Pancreas (tissue), 10 donors: ENCODE measurements at regions of chr17 and their contacts with region 1.

Region 1: DNA sequence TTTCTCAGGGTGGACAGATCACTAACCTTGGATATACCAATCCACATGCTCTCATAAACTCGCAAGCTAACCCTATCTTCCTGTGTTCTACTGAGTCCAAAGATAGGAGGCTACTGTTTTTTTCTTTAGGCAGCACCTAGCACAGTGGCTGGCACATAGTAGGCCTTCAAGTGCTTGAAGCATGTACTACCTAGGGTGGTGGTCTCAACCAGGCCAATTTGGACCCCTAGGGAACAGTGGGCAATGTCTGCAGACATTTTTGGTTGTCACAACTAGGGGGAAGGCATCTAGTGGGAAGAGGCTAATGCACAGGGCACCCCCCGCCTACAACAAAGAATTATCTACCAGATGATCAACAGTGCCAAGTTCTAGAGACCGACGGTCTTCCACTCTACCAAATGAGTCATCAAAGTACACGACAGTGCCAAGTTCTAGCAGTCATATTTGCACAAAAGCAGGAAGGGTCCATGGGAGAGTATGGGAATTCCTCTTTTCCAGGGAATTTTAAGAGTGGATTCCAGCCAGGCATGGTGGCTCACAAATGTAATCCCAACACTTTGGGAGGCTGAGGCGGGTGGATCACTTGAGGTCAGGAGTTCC is 390.3 kb downstream of the SLC39A11 start:
- DNase-seq: no peak
- ATAC-seq: peak in 1 of 4 donors; percentile 34
- H3K4me3 ChIP-seq: no peak overlapping the region
- H3K27ac ChIP-seq: no peak overlapping the region
- H3K4me1 ChIP-seq: no peaks in the 10 kb centered on the region
- H3K27me3 ChIP-seq: no peaks in the 10 kb centered on the region
- CTCF ChIP-seq: no peak

Region 2: GRCh38 chr17:72560303-72561247 is 141.7 kb before region 1 on chr17:
- intact Hi-C with region 1: loop called in 1 of 3 experiments (anchors 10 kb)
- DNase-seq: peak in 4 of 6 donors; percentile 54 to 81 (median 60)
- ATAC-seq: peak; percentile 79 to 90 (median 84)
- H3K4me3 ChIP-seq: no peak overlapping the region
- H3K27ac ChIP-seq: no peak overlapping the region
- H3K4me1 ChIP-seq: peaks cover 0 to 9% (median 0%) of the 10 kb centered on the region in 3 donors
- H3K27me3 ChIP-seq: no peaks in the 10 kb centered on the region
- CTCF ChIP-seq: peak; percentile 74 to 85 (median 78)

Region 3: DNA sequence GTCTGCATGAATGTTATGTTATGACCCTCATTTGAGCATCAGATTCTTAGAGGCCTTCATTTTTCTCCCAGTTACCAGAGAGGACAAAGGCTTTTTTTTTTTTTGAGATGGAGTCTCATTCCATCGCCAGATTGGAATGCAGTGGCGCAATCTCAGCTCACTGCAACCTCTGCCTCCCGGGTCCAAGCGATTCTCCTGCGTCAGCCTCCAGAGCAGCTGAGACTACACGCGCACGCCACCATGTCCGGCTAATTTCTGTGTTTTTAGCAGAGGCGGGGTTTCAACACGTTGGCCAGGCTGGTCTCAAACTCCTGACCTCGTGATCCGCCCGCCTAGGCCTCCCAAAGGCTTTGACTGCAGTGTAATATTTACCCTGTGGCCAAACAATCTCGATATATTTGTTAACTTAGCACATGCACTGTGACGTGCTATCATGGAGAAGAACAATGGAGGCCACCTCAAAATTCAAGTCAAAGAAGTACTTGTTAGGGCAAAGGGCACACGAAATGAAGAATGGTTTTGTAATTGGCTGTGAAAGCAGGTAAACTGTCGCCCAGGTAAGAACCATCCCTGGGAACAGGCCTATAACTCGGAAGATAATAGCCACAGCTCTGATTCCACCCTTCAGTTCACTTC is 86.8 kb after region 1 on chr17:
- intact Hi-C with region 1: no loop called
- DNase-seq: no peak
- ATAC-seq: no peak
- H3K4me3 ChIP-seq: no peak overlapping the region
- H3K27ac ChIP-seq: no peak overlapping the region
- H3K4me1 ChIP-seq: no peaks in the 10 kb centered on the region
- H3K27me3 ChIP-seq: no peaks in the 10 kb centered on the region
- CTCF ChIP-seq: no peak